ENCODE measurements at regions of chr9 and their contacts with region 1.

Region 1: DNA sequence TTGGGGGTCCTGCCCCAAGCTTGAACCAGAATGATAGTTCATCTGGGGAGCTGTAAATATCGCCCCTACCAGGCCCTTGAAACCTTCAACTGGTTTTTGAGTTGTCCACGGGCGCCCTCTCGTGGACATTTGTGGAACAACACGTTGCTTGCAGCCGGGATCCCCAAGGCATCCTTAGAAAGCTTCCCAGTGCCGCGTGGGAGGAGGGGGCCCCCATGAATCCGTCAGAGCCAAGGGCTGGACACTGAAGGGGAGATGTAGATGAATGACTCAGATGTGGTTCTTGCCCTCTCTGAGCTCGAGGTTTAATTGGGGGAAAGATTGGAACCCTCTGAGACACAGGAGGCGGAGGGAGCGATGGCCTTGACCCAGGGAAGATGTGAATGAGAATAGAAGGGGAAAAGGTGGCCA is 31.8 kb upstream of the ORM1 start:
- DNase-seq: peak; percentile 72
- ATAC-seq: peak; percentile 66
- H3K4me3 Mint-ChIP-seq: no peak overlapping the region
- H3K27ac Mint-ChIP-seq: no peak overlapping the region
- H3K4me1 Mint-ChIP-seq: no peaks in the 10 kb centered on the region
- H3K27me3 Mint-ChIP-seq: peaks cover 19% of the 10 kb centered on the region

Region 2: GRCh38 chr9:114108016-114108833 is 182.8 kb before region 1 on chr9:
- CTCF ChIA-PET with region 1: interaction called, 61 read pairs
- DNase-seq: peak; percentile 71
- ATAC-seq: peak; percentile 86
- H3K4me3 Mint-ChIP-seq: no peak overlapping the region
- H3K27ac Mint-ChIP-seq: no peak overlapping the region
- H3K4me1 Mint-ChIP-seq: no peaks in the 10 kb centered on the region
- H3K27me3 Mint-ChIP-seq: peaks cover 23% of the 10 kb centered on the region

Region 3: DNA sequence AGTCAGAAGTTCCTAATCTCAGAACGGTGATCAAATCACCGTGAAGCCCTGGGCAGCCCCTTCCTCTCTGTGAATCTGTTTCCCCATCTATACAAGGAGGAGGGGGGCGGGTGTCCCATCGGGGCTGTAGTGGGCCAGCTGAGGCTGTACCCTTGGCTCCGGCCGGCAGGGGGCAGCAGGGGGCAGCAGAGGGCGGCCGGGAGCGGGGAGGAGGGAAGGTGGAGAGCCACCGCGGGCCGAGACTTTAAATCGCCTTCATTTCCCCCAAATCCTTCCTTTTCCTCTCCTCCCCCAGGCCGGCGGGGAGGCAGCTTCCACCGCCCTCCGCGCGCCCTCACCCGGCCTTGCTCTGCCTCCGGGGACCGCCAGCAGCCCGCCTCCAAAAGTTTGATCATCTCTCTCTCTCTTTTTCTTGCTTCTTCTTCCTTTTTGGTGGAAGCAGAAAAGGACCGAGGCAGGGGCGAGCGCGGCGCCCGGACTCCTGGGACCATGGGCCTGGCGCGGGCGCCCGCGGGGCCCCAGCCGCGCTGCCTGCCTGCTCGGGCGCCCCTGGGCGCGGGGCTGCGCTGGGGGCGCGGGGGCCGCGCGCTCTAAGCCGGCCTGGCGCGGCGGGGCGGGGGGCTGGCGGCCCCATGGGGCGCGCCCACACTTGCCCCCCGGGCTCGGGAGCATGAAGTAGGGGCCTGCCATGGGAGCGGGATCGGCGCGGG is 135.7 kb before region 1 on chr9 and contains the start of gene COL27A1:
- CTCF ChIA-PET with region 1: interaction called, 46 read pairs
- DNase-seq: peak; percentile 82
- ATAC-seq: peak; percentile 92
- H3K4me3 Mint-ChIP-seq: peak within 1 kb of the TSS; percentile 63
- H3K27ac Mint-ChIP-seq: peak within 1 kb of the TSS; percentile 20
- H3K4me1 Mint-ChIP-seq: peaks cover 8% of the 10 kb centered on the region
- H3K27me3 Mint-ChIP-seq: peaks cover 55% of the 10 kb centered on the region
- total RNA-seq, gene COL27A1: 0.15 to 0.30 TPM

Measured in activated CD8-positive, alpha-beta memory T cell treated with anti-CD3 and anti-CD28 coated beads, Interleukin-2, amount 10 ng/mL, durations not matched to agents 7 days and 5 days (primary cell).